ENCODE measurements at regions of chr13 and their contacts with region 1.

Region 1: DNA sequence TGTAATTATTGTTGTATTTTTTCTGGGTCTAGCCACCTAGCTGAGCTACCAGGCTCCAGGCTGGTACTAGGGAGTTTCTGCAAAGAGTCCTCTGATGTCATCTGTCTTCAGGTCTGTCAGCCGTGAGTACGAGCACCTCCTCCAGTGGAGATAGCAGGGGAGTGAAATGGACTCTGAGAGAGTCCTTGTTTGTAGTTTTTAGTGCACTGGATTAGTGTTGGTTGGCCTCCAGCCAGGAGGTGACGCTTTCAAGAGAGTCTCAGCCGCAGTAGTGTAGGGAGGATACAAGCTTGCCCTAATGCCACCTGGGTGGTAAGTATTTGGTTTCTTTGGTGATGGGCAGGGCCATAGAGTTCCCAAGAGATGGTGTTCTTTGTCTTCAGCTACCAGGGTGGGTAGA is 384.8 kb downstream of the SLC7A1 start:
- DNase-seq: no peak
- ATAC-seq: no peak
- H3K4me3 ChIP-seq: no peak overlapping the region
- H3K4me3 Mint-ChIP-seq: no peak overlapping the region
- H3K27ac ChIP-seq: no peak overlapping the region
- H3K27ac Mint-ChIP-seq: no peak overlapping the region
- H3K4me1 ChIP-seq: no peaks in the 10 kb centered on the region
- H3K4me1 Mint-ChIP-seq: no peaks in the 10 kb centered on the region
- H3K27me3 ChIP-seq: no peaks in the 10 kb centered on the region
- H3K27me3 Mint-ChIP-seq: no peaks in the 10 kb centered on the region
- CTCF ChIP-seq: no peak

Region 2: GRCh38 chr13:29254626-29255370 is 44.1 kb after region 1 on chr13:
- CTCF ChIA-PET with region 1: no interaction called
- POLR2A ChIA-PET with region 1: no interaction called
- intact Hi-C with region 1: no loop called
- DNase-seq: no peak
- ATAC-seq: no peak
- H3K4me3 ChIP-seq: no peak overlapping the region
- H3K4me3 Mint-ChIP-seq: no peak overlapping the region
- H3K27ac ChIP-seq: no peak overlapping the region
- H3K27ac Mint-ChIP-seq: no peak overlapping the region
- H3K4me1 ChIP-seq: no peaks in the 10 kb centered on the region
- H3K4me1 Mint-ChIP-seq: no peaks in the 10 kb centered on the region
- H3K27me3 ChIP-seq: peaks cover 0 to 3% of the 10 kb centered on the region in 2 experiments
- H3K27me3 Mint-ChIP-seq: peaks cover 7% of the 10 kb centered on the region
- CTCF ChIP-seq: no peak

Region 3: DNA sequence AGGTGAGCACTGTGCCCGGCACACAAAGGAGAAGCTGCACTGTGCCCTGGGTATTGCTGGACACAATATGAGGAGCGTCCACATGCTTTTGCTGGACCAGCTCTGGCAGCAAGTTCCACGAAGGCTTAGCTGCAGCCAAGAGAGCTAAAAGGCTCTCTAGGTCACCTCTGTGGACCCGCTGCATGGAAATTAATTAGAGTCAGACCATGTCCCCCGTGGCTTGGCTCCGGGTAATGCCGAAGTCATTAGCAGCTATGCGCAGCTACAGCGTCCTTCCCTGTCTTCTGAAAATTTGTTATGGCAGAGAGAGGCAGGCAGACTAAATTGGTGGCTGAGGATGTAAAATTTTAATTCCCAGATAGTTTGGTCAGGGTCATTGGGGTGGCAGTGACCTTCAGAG is 113.3 kb after region 1 on chr13:
- CTCF ChIA-PET with region 1: no interaction called
- POLR2A ChIA-PET with region 1: no interaction called
- intact Hi-C with region 1: no loop called
- DNase-seq: no peak
- ATAC-seq: no peak
- H3K4me3 ChIP-seq: no peak overlapping the region
- H3K4me3 Mint-ChIP-seq: no peak overlapping the region
- H3K27ac ChIP-seq: no peak overlapping the region
- H3K27ac Mint-ChIP-seq: no peak overlapping the region
- H3K4me1 ChIP-seq: no peaks in the 10 kb centered on the region
- H3K4me1 Mint-ChIP-seq: no peaks in the 10 kb centered on the region
- H3K27me3 ChIP-seq: no peaks in the 10 kb centered on the region
- H3K27me3 Mint-ChIP-seq: peaks cover 5% of the 10 kb centered on the region
- CTCF ChIP-seq: no peak

Region 4: GRCh38 chr13:29354377-29354776 is 143.7 kb after region 1 on chr13:
- CTCF ChIA-PET with region 1: no interaction called
- POLR2A ChIA-PET with region 1: no interaction called
- intact Hi-C with region 1: loop called in 1 of 2 experiments (anchors 2 kb)
- DNase-seq: no peak
- ATAC-seq: no peak
- H3K4me3 ChIP-seq: no peak overlapping the region
- H3K4me3 Mint-ChIP-seq: no peak overlapping the region
- H3K27ac ChIP-seq: no peak overlapping the region
- H3K27ac Mint-ChIP-seq: no peak overlapping the region
- H3K4me1 ChIP-seq: no peaks in the 10 kb centered on the region
- H3K4me1 Mint-ChIP-seq: no peaks in the 10 kb centered on the region
- H3K27me3 ChIP-seq: no peaks in the 10 kb centered on the region
- H3K27me3 Mint-ChIP-seq: peaks cover 23% of the 10 kb centered on the region
- CTCF ChIP-seq: no peak

Measured in CD8-positive, alpha-beta T cell (primary cell).